ENCODE measurements at regions of chr2 and their contacts with region 1.

Region 1: DNA sequence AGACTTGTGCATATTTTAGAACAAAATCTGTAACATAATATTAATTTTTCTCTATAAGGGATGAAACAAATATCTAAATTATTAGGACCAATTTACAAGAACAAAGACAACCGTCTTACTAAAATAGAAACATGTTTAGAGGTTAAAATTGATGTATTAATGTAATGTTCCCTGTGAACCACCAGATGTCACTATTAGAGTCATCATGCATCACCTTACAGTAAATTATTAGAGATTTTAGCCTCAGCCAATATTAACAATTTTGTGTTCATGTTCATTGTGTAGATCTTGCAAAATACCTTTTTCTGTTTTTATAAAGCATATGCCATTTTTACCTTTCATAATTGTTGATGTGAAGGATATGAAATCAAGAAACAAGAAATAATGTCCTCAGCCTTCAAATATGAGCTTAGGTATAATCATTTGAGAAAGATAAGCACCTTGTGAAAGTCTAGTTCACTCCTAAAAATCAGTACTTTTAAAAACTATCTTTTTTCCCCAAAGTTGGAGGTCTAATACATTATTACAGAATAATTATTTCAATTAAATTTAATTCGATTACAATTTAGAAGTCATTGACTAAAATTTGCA is 344.3 kb upstream of the KCNH7 start:
- DNase-seq: no peak
- ATAC-seq: no peak
- H3K4me3 ChIP-seq: no peak overlapping the region
- H3K27ac ChIP-seq: no peak overlapping the region
- H3K4me1 ChIP-seq: no peaks in the 10 kb centered on the region
- H3K27me3 ChIP-seq: no peaks in the 10 kb centered on the region
- CTCF ChIP-seq: peak; percentile 40; the same call in 1 of the 2 replicates

Region 2: DNA sequence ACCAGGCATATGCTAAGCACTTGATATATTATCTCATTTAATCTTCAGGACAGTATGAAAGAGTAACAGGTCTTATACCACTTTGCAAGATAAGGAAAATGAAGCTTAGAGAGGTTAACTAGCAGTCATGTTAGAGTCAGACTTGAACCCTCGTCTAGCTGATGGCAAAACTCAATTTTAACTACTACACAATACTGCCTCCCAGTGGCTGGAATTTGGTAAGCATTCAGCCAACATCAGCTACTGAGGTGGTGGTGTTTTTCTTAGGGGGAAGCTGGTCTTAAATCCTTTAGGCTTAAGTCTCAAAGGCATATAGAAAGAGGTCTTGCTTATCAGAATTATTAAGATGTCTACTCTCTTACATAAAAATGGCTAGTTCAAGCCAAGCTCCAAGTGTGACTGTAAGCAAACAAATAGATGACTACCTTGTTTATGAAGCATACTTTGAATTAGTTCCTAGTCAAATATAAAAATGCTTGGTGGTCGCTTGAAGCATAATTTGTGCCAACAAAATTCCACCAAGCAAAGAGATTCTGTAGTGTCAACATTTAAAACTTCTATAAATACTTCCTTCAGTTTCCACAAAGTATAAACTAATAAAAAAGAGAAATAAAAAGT is 878.4 kb after region 1 on chr2:
- CTCF ChIA-PET with region 1: no interaction called
- POLR2A ChIA-PET with region 1: no interaction called
- in situ Hi-C with region 1: no loop called
- intact Hi-C with region 1: loop called (anchors 10 kb)
- DNase-seq: peak; percentile 20
- ATAC-seq: no peak
- H3K4me3 ChIP-seq: no peak overlapping the region
- H3K27ac ChIP-seq: peak overlapping the region; percentile 3; the same call in 1 of the 2 replicates
- H3K4me1 ChIP-seq: no peaks in the 10 kb centered on the region
- H3K27me3 ChIP-seq: no peaks in the 10 kb centered on the region
- CTCF ChIP-seq: peak; percentile 65

Region 3: GRCh38 chr2:164430166-164430783 is 1247.4 kb after region 1 on chr2:
- CTCF ChIA-PET with region 1: no interaction called
- POLR2A ChIA-PET with region 1: no interaction called
- in situ Hi-C with region 1: no loop called
- intact Hi-C with region 1: loop called (anchors 5 kb)
- DNase-seq: peak; percentile 25
- ATAC-seq: peak; percentile 83
- H3K4me3 ChIP-seq: no peak overlapping the region
- H3K27ac ChIP-seq: no peak overlapping the region
- H3K4me1 ChIP-seq: peaks cover 5% of the 10 kb centered on the region
- H3K27me3 ChIP-seq: no peaks in the 10 kb centered on the region
- CTCF ChIP-seq: peak; percentile 75; the same call in 1 of the 2 replicates

Region 4: DNA sequence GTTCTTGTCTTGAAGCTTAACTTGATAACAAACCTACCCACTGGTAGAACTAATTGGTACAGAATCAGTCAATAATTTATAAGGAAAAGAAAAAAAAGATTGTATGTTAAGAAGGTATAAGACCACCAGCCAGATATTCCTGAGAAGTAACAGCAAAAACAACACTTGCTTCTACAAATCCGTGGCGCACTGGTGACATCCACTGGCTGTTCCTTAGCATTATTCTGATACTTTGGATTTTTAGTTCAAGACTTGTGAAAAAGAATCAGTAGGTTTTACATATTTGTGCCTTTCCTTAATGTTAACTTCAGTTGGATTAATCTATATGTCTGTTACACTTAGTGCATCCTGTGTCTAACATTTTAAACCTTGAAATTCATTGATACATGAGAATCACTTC is 1296.6 kb after region 1 on chr2:
- CTCF ChIA-PET with region 1: no interaction called
- POLR2A ChIA-PET with region 1: no interaction called
- in situ Hi-C with region 1: no loop called
- intact Hi-C with region 1: loop called (anchors 5 kb)
- DNase-seq: no peak
- ATAC-seq: no peak
- H3K4me3 ChIP-seq: no peak overlapping the region
- H3K27ac ChIP-seq: no peak overlapping the region
- H3K4me1 ChIP-seq: no peaks in the 10 kb centered on the region
- H3K27me3 ChIP-seq: no peaks in the 10 kb centered on the region
- CTCF ChIP-seq: peak; percentile 59; the same call in 1 of the 2 replicates